Endothelial cell of umbilical vein (primary cell): ENCODE measurements at regions of chrX and their contacts with region 1.

Region 1: DNA sequence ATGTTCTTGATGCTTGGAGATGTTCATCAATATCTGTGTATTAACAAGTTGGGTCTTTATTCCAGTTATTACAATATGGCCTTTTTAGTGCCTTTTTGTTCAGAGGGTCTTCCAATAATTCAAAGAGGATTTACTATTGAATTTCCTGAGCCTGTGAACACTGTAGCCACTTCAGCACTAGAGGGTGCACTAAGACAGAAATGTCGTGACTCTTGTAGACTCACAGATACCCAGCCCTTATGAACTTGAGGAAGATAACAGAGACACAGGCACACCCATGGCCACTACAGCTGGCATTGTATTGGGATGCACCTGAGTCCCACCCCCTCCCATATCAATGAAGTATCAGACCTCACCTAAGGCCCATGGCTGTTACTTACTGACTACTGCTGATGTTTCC is 54.4 kb upstream of the ACTRT1 start:
- DNase-seq: peak; percentile 49
- H3K4me3 ChIP-seq: no peak overlapping the region
- H3K27ac ChIP-seq: no peak overlapping the region
- H3K4me1 ChIP-seq: no peaks in the 10 kb centered on the region
- H3K27me3 ChIP-seq: no peaks in the 10 kb centered on the region
- CTCF ChIP-seq: peak; percentile 31 to 33
- POLR2A ChIP-seq: no peak

Region 2: DNA sequence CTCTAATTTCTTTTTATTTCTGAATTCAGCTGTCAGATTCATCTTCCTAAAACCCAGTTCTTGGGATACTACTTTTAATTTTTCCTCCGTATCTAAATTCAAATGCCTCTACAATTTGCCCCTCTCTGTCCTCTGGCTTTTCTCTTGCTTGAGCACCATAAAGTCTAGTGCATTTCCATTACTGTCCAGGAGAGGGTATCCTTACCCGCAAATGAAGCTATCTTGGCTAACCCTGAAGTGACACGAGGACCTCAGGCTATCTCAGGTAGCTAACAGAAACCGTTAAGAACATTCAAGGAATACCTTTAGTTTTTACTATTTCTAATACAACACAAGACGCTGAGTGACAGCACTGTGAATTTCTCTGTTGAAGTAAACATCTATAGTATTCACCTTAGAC is 1336.4 kb before region 1 on chrX:
- CTCF ChIA-PET with region 1: no interaction called
- POLR2A ChIA-PET with region 1: no interaction called
- dilution Hi-C with region 1: no loop called
- intact Hi-C with region 1: loop called (anchors 5 kb)
- DNase-seq: peak; percentile 15
- H3K4me3 ChIP-seq: no peak overlapping the region
- H3K27ac ChIP-seq: no peak overlapping the region
- H3K4me1 ChIP-seq: no peaks in the 10 kb centered on the region
- H3K27me3 ChIP-seq: no peaks in the 10 kb centered on the region
- CTCF ChIP-seq: peak in 1 of 2 donors; percentile 28
- POLR2A ChIP-seq: no peak

Region 3: DNA sequence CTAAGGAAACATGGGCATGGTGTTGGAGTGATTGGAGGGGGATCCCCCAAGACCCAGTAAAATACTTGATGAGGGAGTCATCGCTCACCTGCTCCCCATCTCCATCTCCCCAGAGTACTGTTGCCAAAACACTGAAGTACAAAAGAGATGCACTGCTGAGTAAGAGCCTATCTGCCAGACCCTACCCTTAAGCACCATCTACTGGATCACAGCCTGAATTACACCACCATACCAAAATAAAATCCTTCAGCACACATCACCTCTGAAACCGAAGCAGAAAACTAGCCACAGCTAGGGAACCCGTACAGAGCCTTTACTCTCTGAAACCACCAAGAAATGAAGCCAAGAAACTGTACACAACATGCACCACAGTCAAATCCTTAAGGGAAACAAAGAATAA is 411.9 kb after region 1 on chrX:
- CTCF ChIA-PET with region 1: interaction called, 18 read pairs
- POLR2A ChIA-PET with region 1: no interaction called
- dilution Hi-C with region 1: no loop called
- intact Hi-C with region 1: loop called (anchors 1 kb)
- DNase-seq: peak; percentile 33
- H3K4me3 ChIP-seq: no peak overlapping the region
- H3K27ac ChIP-seq: no peak overlapping the region
- H3K4me1 ChIP-seq: no peaks in the 10 kb centered on the region
- H3K27me3 ChIP-seq: no peaks in the 10 kb centered on the region
- CTCF ChIP-seq: peak; percentile 28 to 36
- POLR2A ChIP-seq: no peak

Region 4: GRCh38 chrX:128781493-128781892 is 674.9 kb after region 1 on chrX:
- CTCF ChIA-PET with region 1: no interaction called
- POLR2A ChIA-PET with region 1: no interaction called
- dilution Hi-C with region 1: no loop called
- intact Hi-C with region 1: loop called (anchors 2 kb)
- DNase-seq: no peak
- H3K4me3 ChIP-seq: no peak overlapping the region
- H3K27ac ChIP-seq: no peak overlapping the region
- H3K4me1 ChIP-seq: no peaks in the 10 kb centered on the region
- H3K27me3 ChIP-seq: no peaks in the 10 kb centered on the region
- CTCF ChIP-seq: peak in 1 of 2 donors; percentile 10
- POLR2A ChIP-seq: no peak

Region 5: GRCh38 chrX:128975745-128976144 is 869.1 kb after region 1 on chrX:
- CTCF ChIA-PET with region 1: no interaction called
- POLR2A ChIA-PET with region 1: no interaction called
- dilution Hi-C with region 1: no loop called
- intact Hi-C with region 1: loop called (anchors 10 kb)
- DNase-seq: peak; percentile 3
- H3K4me3 ChIP-seq: no peak overlapping the region
- H3K27ac ChIP-seq: no peak overlapping the region
- H3K4me1 ChIP-seq: no peaks in the 10 kb centered on the region
- H3K27me3 ChIP-seq: no peaks in the 10 kb centered on the region
- CTCF ChIP-seq: peak; percentile 17 to 55
- POLR2A ChIP-seq: no peak